ENCODE measurements at regions of chr3 and their contacts with region 1.

Region 1: GRCh38 chr3:10758304-10759061 is 57.5 kb upstream of the SLC6A11 start:
- DNase-seq: peak; percentile 50
- ATAC-seq: peak; percentile 74
- H3K4me3 Mint-ChIP-seq: no peak overlapping the region
- H3K27ac Mint-ChIP-seq: no peak overlapping the region
- H3K4me1 Mint-ChIP-seq: peaks cover 3% of the 10 kb centered on the region
- H3K27me3 Mint-ChIP-seq: peaks cover 41% of the 10 kb centered on the region
- CTCF ChIP-seq: peak; percentile 81

Region 2: GRCh38 chr3:10738688-10739372 is 19.7 kb before region 1 on chr3:
- CTCF ChIA-PET with region 1: interaction called, 60 read pairs
- POLR2A ChIA-PET with region 1: interaction called, 3 read pairs
- intact Hi-C with region 1: no loop called
- DNase-seq: peak; percentile 80
- ATAC-seq: peak; percentile 74
- H3K4me3 Mint-ChIP-seq: peak overlapping the region; percentile 31
- H3K27ac Mint-ChIP-seq: no peak overlapping the region
- H3K4me1 Mint-ChIP-seq: peaks cover 4% of the 10 kb centered on the region
- H3K27me3 Mint-ChIP-seq: peaks cover 39% of the 10 kb centered on the region
- CTCF ChIP-seq: peak; percentile 83

Region 3: GRCh38 chr3:10748040-10748439 is 10.4 kb before region 1 on chr3:
- CTCF ChIA-PET with region 1: interaction called, 21 read pairs
- POLR2A ChIA-PET with region 1: interaction called, 3 read pairs
- intact Hi-C with region 1: no loop called
- DNase-seq: no peak
- ATAC-seq: no peak
- H3K4me3 Mint-ChIP-seq: no peak overlapping the region
- H3K27ac Mint-ChIP-seq: no peak overlapping the region
- H3K4me1 Mint-ChIP-seq: no peaks in the 10 kb centered on the region
- H3K27me3 Mint-ChIP-seq: peaks cover 13% of the 10 kb centered on the region
- CTCF ChIP-seq: no peak

Region 4: GRCh38 chr3:10772271-10773161 is 14.0 kb after region 1 on chr3:
- CTCF ChIA-PET with region 1: interaction called, 30 read pairs
- POLR2A ChIA-PET with region 1: no interaction called
- intact Hi-C with region 1: no loop called
- DNase-seq: peak; percentile 35
- ATAC-seq: no peak
- H3K4me3 Mint-ChIP-seq: no peak overlapping the region
- H3K27ac Mint-ChIP-seq: no peak overlapping the region
- H3K4me1 Mint-ChIP-seq: no peaks in the 10 kb centered on the region
- H3K27me3 Mint-ChIP-seq: peaks cover 8% of the 10 kb centered on the region
- CTCF ChIP-seq: peak; percentile 22

Region 5: GRCh38 chr3:10783357-10784351 is 25.2 kb after region 1 on chr3:
- CTCF ChIA-PET with region 1: interaction called, 17 read pairs
- POLR2A ChIA-PET with region 1: no interaction called
- intact Hi-C with region 1: no loop called
- DNase-seq: peak; percentile 53
- ATAC-seq: peak; percentile 42
- H3K4me3 Mint-ChIP-seq: no peak overlapping the region
- H3K27ac Mint-ChIP-seq: no peak overlapping the region
- H3K4me1 Mint-ChIP-seq: peaks cover 6% of the 10 kb centered on the region
- H3K27me3 Mint-ChIP-seq: peaks cover 28% of the 10 kb centered on the region
- CTCF ChIP-seq: peak; percentile 95

Region 6: DNA sequence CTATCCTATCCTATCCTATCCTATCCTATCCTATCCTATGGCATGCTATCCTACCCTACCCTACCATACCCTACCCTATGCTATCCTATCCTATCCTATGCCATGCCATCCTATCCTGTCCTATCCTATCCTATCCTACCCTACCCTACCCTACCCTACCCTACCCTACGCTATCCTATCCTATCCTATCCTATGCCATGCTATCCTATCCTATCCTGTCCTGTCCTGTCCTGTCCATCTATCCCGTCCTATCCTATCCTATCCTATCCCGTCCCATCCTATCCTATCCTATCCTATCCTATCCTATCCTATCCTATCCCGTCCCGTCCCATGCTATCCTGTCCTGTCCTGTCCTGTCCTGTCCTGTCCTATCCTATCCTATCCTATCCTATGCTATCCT is 114.9 kb after region 1 on chr3:
- CTCF ChIA-PET with region 1: no interaction called
- POLR2A ChIA-PET with region 1: no interaction called
- intact Hi-C with region 1: no loop called
- DNase-seq: no peak
- ATAC-seq: no peak
- H3K4me3 Mint-ChIP-seq: no peak overlapping the region
- H3K27ac Mint-ChIP-seq: no peak overlapping the region
- H3K4me1 Mint-ChIP-seq: no peaks in the 10 kb centered on the region
- H3K27me3 Mint-ChIP-seq: peaks cover 4% of the 10 kb centered on the region
- CTCF ChIP-seq: no peak

Region 7: DNA sequence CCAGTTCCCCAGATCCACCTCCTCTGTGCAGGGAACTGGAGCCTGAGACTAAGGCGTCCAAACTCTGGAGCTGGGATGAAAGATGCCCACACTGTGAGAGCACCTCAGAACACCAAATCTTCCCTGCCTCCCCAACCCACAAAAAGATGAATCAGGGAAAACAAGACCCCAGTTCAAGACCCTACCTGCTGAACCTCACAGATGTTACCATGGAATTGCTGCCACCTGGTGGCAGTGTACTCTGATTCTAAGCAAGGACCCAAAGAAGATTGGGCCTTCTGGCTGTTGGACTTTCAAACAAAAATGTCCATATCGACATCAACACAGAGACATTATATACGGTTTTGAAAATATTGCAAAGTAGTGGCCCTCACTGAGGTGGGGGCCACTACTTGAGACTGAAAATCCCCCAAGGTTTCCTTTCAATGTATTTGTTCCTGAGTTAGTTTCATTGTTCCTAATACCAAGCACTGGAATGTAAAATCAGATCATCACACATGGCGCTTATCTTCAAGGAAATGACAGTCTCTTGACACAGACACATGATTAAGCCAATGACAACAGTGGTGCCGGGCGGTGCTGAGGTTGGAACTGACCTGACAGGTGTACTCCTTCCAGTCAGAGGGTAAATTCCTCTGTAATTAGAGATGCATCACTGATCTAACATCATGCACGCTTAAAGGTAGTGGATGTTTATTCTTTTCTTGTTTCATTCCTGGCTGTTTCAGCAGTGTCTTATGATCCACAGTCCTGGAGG is 125.2 kb after region 1 on chr3:
- CTCF ChIA-PET with region 1: interaction called, 14 read pairs
- POLR2A ChIA-PET with region 1: no interaction called
- intact Hi-C with region 1: loop called (anchors 2 kb)
- DNase-seq: peak; percentile 39
- ATAC-seq: no peak
- H3K4me3 Mint-ChIP-seq: no peak overlapping the region
- H3K27ac Mint-ChIP-seq: no peak overlapping the region
- H3K4me1 Mint-ChIP-seq: no peaks in the 10 kb centered on the region
- H3K27me3 Mint-ChIP-seq: peaks cover 20% of the 10 kb centered on the region
- CTCF ChIP-seq: no peak

Region 8: DNA sequence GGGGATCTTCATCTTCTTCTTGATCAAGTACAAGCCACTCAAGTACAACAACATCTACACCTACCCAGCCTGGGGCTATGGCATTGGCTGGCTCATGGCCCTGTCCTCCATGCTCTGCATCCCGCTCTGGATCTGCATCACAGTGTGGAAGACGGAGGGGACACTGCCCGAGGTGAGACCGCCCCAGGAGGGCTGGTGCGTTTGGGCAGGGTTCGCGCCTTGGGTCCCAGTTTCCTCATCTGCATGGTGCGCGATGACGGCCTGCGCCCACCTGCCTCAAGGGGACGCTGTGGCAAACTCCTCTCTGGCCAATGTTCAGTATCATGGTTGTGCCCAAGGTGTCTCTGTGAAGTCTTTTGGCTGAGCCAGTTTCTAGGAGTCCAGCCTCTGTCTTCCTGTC is 176.5 kb after region 1 on chr3:
- CTCF ChIA-PET with region 1: no interaction called
- POLR2A ChIA-PET with region 1: no interaction called
- intact Hi-C with region 1: no loop called
- DNase-seq: no peak
- ATAC-seq: no peak
- H3K4me3 Mint-ChIP-seq: no peak overlapping the region
- H3K27ac Mint-ChIP-seq: no peak overlapping the region
- H3K4me1 Mint-ChIP-seq: no peaks in the 10 kb centered on the region
- H3K27me3 Mint-ChIP-seq: no peaks in the 10 kb centered on the region
- CTCF ChIP-seq: no peak

Region 9: GRCh38 chr3:10945683-10946287 is 187.3 kb after region 1 on chr3:
- CTCF ChIA-PET with region 1: interaction called, 55 read pairs
- POLR2A ChIA-PET with region 1: no interaction called
- intact Hi-C with region 1: no loop called
- DNase-seq: peak; percentile 67
- ATAC-seq: peak; percentile 67
- H3K4me3 Mint-ChIP-seq: no peak overlapping the region
- H3K27ac Mint-ChIP-seq: no peak overlapping the region
- H3K4me1 Mint-ChIP-seq: no peaks in the 10 kb centered on the region
- H3K27me3 Mint-ChIP-seq: peaks cover 10% of the 10 kb centered on the region
- CTCF ChIP-seq: peak; percentile 82

Measured in activated CD8-positive, alpha-beta T cell treated with anti-CD3 and anti-CD28 coated beads for 36 hours (primary cell).